Endothelial cell of umbilical vein (primary cell): ENCODE measurements at regions of chr3 and their contacts with region 1.

Region 1: DNA sequence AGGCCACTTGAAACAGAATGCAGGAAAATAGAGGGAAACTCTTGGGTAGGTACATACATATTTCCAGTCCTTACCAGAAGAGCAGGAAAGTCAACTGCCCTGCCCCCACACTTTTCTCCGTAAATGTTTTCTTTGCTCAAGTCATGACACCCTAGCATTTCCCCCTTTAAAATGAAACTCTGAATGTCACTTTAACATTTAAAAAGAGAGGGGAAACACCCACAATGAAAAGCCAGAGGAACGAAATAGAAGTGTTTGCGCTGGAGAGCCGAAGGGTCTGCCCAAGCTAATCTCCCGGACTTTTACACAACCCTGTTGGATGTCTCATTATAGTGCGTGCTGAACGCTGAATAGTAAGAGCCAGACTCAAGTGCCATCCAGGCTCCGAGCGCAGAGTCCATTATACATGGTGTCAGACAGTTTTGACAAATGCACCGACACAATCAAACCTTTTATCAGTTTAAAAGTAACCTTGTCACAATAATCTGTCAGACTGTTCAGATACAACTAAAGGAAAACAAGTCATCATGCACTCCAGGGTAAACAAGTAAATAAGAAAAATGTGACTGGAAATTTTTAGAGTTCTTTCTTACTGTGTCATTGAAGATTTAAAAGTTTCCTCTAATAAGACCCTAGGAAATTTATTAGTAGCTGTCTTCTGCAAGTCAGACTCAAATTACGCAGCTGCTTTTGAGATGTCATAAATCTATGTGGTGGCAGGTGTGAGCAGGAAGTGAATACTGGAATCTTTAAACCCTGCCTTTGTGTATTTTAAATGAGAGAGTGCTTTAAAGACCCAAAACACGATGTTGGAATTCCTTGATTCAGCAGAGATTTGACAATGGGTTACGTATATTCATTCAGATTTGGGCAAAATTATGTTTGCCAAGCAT is 159.8 kb downstream of the RBMS3 start:
- DNase-seq: peak; percentile 59
- H3K4me3 ChIP-seq: peak overlapping the region in 2 of 3 experiments; percentile 21 to 27
- H3K27ac ChIP-seq: peak overlapping the region; percentile 21
- H3K4me1 ChIP-seq: peaks cover 13% of the 10 kb centered on the region
- H3K27me3 ChIP-seq: no peaks in the 10 kb centered on the region
- CTCF ChIP-seq: no peak
- POLR2A ChIP-seq: no peak

Region 2: DNA sequence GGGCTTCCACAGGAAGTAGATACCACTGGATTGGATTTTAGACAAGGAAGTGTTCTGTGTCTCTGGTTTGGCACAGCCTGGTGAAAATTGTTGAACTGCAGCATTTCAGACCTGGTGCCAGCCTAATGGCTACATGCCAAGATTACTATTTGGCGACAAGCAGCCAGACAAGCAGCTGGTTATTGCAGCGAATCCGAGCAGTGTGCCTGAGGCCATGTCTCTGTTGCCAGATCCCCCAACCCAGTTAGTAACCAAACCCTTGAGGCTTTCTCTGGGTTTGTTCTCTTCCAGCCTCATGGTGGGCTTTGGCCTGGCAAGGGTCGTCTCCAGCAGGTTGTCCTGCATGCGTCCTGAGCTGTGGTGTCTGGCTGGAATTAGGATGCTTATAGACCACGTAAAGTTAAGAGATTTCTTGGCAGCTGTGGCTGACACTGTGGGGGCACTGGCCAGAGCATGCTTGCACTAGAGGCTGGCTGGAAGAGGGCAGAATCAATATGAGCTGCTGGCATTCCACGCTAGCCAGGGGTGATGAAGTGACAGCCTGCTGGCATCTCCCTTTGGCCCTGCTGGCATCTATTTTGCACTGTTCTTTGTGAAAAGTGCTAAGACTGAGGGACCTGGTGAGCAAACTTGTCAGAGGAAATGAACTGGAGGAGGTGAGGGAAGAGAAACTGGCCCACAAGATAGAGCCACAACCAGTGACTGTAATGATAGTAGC is 12.8 kb after region 1 on chr3:
- CTCF ChIA-PET with region 1: no interaction called
- POLR2A ChIA-PET with region 1: no interaction called
- dilution Hi-C with region 1: no loop called
- intact Hi-C with region 1: no loop called
- DNase-seq: no peak
- H3K4me3 ChIP-seq: no peak overlapping the region
- H3K27ac ChIP-seq: no peak overlapping the region
- H3K4me1 ChIP-seq: no peaks in the 10 kb centered on the region
- H3K27me3 ChIP-seq: no peaks in the 10 kb centered on the region
- CTCF ChIP-seq: no peak
- POLR2A ChIP-seq: no peak

Region 3: DNA sequence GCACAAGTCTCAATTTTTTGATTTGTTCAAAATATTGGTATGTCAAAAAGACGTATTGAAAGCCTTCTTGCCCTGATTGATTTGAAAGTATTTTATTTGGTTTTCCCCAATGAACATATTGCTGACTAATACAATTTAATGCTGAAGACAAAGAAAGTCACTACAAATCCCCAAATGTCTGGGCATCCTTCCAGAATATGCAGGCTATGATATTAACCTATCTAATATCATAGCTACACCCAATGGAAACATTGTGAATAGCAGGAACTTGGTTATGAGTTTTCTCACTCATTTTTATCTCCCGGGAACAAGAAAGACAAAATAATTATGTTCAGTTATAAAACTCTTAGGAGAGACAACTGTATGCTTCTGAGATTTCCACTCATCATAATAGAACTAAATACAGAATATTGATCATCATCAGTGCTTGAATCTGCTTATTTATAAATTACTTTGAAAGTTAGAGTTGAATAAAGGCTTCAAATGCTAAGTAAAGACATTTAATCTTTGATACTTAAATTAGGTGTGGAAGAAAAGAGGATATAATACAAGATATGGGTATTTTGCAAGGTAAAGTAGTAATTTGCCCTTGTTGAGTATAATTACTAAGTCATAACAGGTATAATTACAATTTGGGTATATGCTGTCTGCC is 324.1 kb after region 1 on chr3:
- CTCF ChIA-PET with region 1: no interaction called
- POLR2A ChIA-PET with region 1: no interaction called
- dilution Hi-C with region 1: no loop called
- intact Hi-C with region 1: loop called (anchors 5 kb)
- DNase-seq: peak; percentile 83
- H3K4me3 ChIP-seq: no peak overlapping the region
- H3K27ac ChIP-seq: no peak overlapping the region
- H3K4me1 ChIP-seq: peaks cover 14% of the 10 kb centered on the region
- H3K27me3 ChIP-seq: no peaks in the 10 kb centered on the region
- CTCF ChIP-seq: peak; percentile 36 to 47
- POLR2A ChIP-seq: no peak

Region 4: GRCh38 chr3:29892976-29893554 is 452.4 kb after region 1 on chr3:
- CTCF ChIA-PET with region 1: no interaction called
- POLR2A ChIA-PET with region 1: no interaction called
- dilution Hi-C with region 1: no loop called
- intact Hi-C with region 1: loop called (anchors 5 kb)
- DNase-seq: no peak
- H3K4me3 ChIP-seq: no peak overlapping the region
- H3K27ac ChIP-seq: no peak overlapping the region
- H3K4me1 ChIP-seq: no peaks in the 10 kb centered on the region
- H3K27me3 ChIP-seq: no peaks in the 10 kb centered on the region
- CTCF ChIP-seq: no peak
- POLR2A ChIP-seq: no peak